K562 (cell line): ENCODE measurements at regions of chr11 and their contacts with region 1.

Region 1: GRCh38 chr11:78350646-78351165 is 66.9 kb downstream of the GAB2 start:
- DNase-seq: peak in 1 of 4 experiments; percentile 40
- ATAC-seq: peak; percentile 9
- H3K4me3 ChIP-seq: peak overlapping the region; percentile 21; the same call in 1 of the 2 replicates
- H3K27ac ChIP-seq: peak overlapping the region; percentile 84
- H3K4me1 ChIP-seq: peaks cover 12 to 82% of the 10 kb centered on the region in 2 experiments
- H3K27me3 ChIP-seq: no peaks in the 10 kb centered on the region
- CTCF ChIP-seq: no peak
- EP300 ChIP-seq: no peak
- POLR2A ChIP-seq: no peak
- RAD21 ChIP-seq: 0 out of 4 replicates have a peak, but pooled peaks of 1 of the 2 experiments have one; percentile 6

Region 2: GRCh38 chr11:78338138-78338537 is 12.6 kb before region 1 on chr11:
- CTCF ChIA-PET with region 1: no interaction called
- POLR2A ChIA-PET with region 1: interaction called, 30 read pairs
- in situ Hi-C with region 1: no loop called
- intact Hi-C with region 1: no loop called
- DNase-seq: peak in 1 of 4 experiments; percentile 16
- ATAC-seq: peak; percentile 19; the same call in 1 of the 3 replicates
- H3K4me3 ChIP-seq: no peak overlapping the region
- H3K27ac ChIP-seq: peak overlapping the region; percentile 60; the same call in 1 of the 3 replicates
- H3K4me1 ChIP-seq: peaks cover 13 to 55% of the 10 kb centered on the region in 2 experiments; a peak in 4 of 5 replicates
- H3K27me3 ChIP-seq: no peaks in the 10 kb centered on the region
- CTCF ChIP-seq: no peak
- EP300 ChIP-seq: no peak
- POLR2A ChIP-seq: no peak
- RAD21 ChIP-seq: no peak

Region 3: DNA sequence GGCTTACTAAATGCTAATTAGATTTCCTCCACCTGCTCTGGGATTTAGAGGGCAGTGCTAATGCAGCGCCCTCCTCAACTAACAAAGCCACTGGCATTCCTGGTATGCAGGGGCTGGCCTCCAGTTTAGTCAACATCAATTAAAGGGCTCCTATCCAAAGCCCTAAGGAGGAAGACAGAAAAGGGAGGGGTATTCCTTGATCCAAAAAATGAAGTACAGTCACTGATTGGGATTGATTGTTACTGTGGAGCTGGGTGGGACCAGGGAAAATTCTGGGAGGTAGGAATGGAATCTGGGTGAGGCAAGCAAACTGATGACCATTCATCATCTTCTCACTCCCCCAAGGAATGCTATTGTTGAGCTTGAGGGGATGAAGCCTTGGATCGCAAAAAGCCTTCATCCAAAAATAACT is 14.7 kb after region 1 on chr11:
- CTCF ChIA-PET with region 1: interaction called, 3 read pairs
- POLR2A ChIA-PET with region 1: interaction called, 12 read pairs
- in situ Hi-C with region 1: no loop called
- intact Hi-C with region 1: no loop called
- DNase-seq: no peak
- ATAC-seq: no peak
- H3K4me3 ChIP-seq: no peak overlapping the region
- H3K27ac ChIP-seq: no peak overlapping the region
- H3K4me1 ChIP-seq: peaks cover 3 to 4% of the 10 kb centered on the region in 2 experiments; a peak in 3 of 5 replicates
- H3K27me3 ChIP-seq: no peaks in the 10 kb centered on the region
- CTCF ChIP-seq: no peak
- EP300 ChIP-seq: no peak
- POLR2A ChIP-seq: no peak
- RAD21 ChIP-seq: no peak

Region 4: GRCh38 chr11:78406538-78407196 is 56.0 kb after region 1 on chr11:
- CTCF ChIA-PET with region 1: no interaction called
- POLR2A ChIA-PET with region 1: no interaction called
- in situ Hi-C with region 1: no loop called
- intact Hi-C with region 1: no loop called
- DNase-seq: no peak
- ATAC-seq: no peak; the same call in 2 of the 3 replicates
- H3K4me3 ChIP-seq: no peak overlapping the region
- H3K27ac ChIP-seq: no peak overlapping the region
- H3K4me1 ChIP-seq: peaks cover 3% of the 10 kb centered on the region in 2 experiments; a peak in 2 of 5 replicates
- H3K27me3 ChIP-seq: no peaks in the 10 kb centered on the region
- CTCF ChIP-seq: no peak
- EP300 ChIP-seq: peak; percentile 28; the same call in 1 of the 2 replicates
- POLR2A ChIP-seq: no peak
- RAD21 ChIP-seq: no peak